ENCODE measurements at regions of chr9 and their contacts with region 1.

Region 1: DNA sequence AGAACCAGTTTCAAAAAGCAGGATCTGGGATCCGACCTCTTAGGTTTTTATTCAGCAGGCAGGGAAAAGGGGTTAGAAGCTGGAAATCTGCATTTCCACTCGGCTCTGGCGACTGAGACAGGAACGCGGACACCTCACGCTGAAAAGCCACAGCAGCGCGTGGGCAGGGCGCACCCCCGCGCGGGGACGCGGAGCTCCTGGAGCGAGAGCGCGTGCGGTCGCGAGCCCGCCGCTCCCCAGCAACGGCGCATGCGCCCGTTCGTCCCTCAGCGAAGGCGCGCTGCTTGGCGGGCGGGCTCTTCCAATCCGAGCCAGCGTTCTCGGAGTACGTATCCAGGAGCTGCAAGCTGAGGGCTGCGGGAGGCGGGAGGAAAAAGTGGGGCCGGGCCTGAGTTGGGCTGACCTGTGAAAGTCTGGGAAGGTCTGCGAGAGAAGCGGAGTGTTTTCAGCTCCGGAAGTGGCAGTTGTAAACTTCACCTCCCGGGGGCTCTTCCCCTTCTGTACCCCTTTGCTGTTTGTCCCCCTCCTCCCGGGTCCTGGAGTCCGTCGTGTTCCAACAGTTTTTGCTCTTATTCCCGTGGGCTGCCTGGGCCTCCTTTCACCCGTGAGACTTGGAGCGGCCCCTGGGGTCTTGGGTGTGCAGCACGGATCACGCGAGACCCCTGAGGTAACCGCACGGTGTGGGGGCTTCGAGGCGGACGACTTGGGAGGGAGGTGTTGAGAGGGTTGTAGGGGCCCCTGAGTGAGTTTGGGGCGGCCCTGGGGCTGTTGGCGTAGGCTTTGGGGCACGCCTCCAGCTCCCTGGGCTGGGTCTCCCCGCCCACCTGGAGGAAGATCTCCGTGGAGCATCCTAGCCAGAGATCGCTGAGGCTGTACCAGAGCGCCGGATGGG is at the start of gene CCDC171:
- DNase-seq: peak; percentile 91
- ATAC-seq: peak; percentile 97
- H3K4me3 ChIP-seq: peak within 1 kb of the TSS; percentile 81
- H3K27ac ChIP-seq: no peak within 1 kb of the TSS; the same call in 1 of the 2 replicates
- H3K4me1 ChIP-seq: peaks cover 9% of the 10 kb centered on the region
- H3K27me3 ChIP-seq: no peaks in the 10 kb centered on the region
- CTCF ChIP-seq: no peak
- total RNA-seq, gene CCDC171: 1.7 and 2.7 TPM in 2 replicates

Region 2: DNA sequence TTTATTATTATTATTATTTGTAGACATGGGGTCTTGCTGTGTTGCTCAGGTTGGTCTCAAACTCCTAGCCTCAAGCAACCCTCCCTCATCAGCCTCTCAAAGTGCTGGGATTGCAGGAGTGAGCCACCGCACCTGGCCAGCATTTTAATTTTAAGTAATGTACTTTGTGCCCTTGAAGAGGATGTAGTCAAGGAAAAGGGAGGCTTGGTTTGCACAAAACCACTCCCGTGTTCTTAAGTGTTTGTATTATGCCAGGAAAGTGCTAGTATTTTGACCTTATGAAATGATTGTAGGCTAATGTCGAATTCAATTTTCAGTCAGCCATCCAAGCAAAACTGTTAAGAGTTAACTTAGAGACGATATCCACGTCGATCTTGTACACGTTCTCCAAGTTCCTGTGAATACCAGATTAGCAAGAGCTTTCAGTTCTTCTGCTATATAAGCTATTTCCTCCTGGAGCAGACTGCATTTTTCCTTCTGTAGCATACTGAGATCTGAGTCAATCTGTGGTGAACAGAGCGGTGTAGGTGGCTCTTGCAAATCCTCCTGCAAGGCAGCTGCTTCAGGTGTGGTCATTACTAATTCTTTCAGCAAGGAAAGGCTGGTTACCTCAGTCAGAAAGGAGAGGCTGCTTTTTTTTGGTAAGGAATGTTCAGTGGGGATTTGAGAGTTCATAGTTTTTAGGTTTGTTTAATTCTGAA is 23.6 kb after region 1 on chr9:
- CTCF ChIA-PET with region 1: no interaction called
- POLR2A ChIA-PET with region 1: interaction called, 31 read pairs
- intact Hi-C with region 1: no loop called
- DNase-seq: no peak
- ATAC-seq: no peak
- H3K4me3 ChIP-seq: no peak overlapping the region
- H3K27ac ChIP-seq: no peak overlapping the region
- H3K4me1 ChIP-seq: no peaks in the 10 kb centered on the region
- H3K27me3 ChIP-seq: no peaks in the 10 kb centered on the region
- CTCF ChIP-seq: no peak